Heart left ventricle (tissue), 16 donors: ENCODE measurements at regions of chr14 and their contacts with region 1.

Region 1: GRCh38 chr14:49633640-49634546 is 1.2 kb downstream of the DNAAF2 start:
- DNase-seq: peak; percentile 93 to 96 (median 94)
- ATAC-seq: peak; percentile 91 to 96 (median 94)
- H3K4me3 ChIP-seq: peak overlapping the region; percentile 68 to 98 (median 95)
- H3K27ac ChIP-seq: peak overlapping the region; percentile 79 to 100 (median 98)
- H3K4me1 ChIP-seq: peaks cover 0 to 61% (median 36%) of the 10 kb centered on the region in 12 donors
- H3K27me3 ChIP-seq: no peaks in the 10 kb centered on the region
- CTCF ChIP-seq: peak; percentile 76 to 96 (median 87)
- POLR2A ChIP-seq: peak in 1 of 2 donors; percentile 66

Region 2: DNA sequence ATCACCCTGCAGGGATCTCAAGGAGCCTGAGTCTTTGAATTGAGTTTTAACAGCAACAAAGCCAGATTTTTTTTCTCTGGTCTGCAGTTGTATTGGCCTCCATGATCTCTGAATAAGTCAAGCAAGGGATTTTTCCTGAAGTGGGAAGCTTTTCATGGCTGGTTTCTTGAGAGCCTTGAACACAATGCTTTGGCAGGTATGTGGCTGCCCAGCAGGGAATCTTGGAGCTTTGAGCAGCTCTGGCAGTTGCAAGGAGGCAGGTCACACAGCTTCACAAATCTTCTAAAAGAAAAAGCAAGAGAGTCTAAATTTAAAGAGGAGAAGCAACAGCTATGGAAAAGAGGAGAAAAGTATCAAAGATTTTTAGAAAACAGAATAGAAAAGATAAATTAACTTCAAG is 107.8 kb before region 1 on chr14:
- intact Hi-C with region 1: no loop called
- DNase-seq: no peak
- ATAC-seq: no peak
- H3K4me3 ChIP-seq: no peak overlapping the region
- H3K27ac ChIP-seq: no peak overlapping the region
- H3K4me1 ChIP-seq: no peaks in the 10 kb centered on the region
- H3K27me3 ChIP-seq: no peaks in the 10 kb centered on the region
- CTCF ChIP-seq: no peak
- POLR2A ChIP-seq: no peak

Region 3: GRCh38 chr14:49767562-49768300 is 133.8 kb after region 1 on chr14 and contains the start of gene KLHDC2:
- intact Hi-C with region 1: loop called in 9 of 10 experiments (anchors 1 to 10 kb)
- DNase-seq: peak; percentile 91 to 96 (median 93)
- ATAC-seq: peak; percentile 84 to 96 (median 93)
- H3K4me3 ChIP-seq: peak within 1 kb of the TSS; percentile 59 to 100 (median 95)
- H3K27ac ChIP-seq: peak within 1 kb of the TSS; percentile 91 to 99 (median 99)
- H3K4me1 ChIP-seq: peaks cover 0 to 37% (median 23%) of the 10 kb centered on the region in 12 donors
- H3K27me3 ChIP-seq: no peaks in the 10 kb centered on the region
- CTCF ChIP-seq: peak in 8 of 12 donors; percentile 22 to 71 (median 49)
- POLR2A ChIP-seq: peak; percentile 81 to 97
- total RNA-seq, gene KLHDC2: 68.2 to 93.6 (median 85.9) TPM

Region 4: GRCh38 chr14:49828640-49829039 is 194.7 kb after region 1 on chr14:
- intact Hi-C with region 1: loop called in 5 of 10 experiments (anchors 1 to 10 kb)
- DNase-seq: no peak
- ATAC-seq: no peak
- H3K4me3 ChIP-seq: no peak overlapping the region
- H3K27ac ChIP-seq: no peak overlapping the region
- H3K4me1 ChIP-seq: no peaks in the 10 kb centered on the region
- H3K27me3 ChIP-seq: no peaks in the 10 kb centered on the region
- CTCF ChIP-seq: no peak
- POLR2A ChIP-seq: no peak

Region 5: GRCh38 chr14:49862089-49862673 is 228.3 kb after region 1 on chr14:
- intact Hi-C with region 1: loop called in 3 of 10 experiments (anchors 1 to 10 kb)
- DNase-seq: peak; percentile 79 to 87 (median 86)
- ATAC-seq: peak; percentile 33 to 60 (median 51)
- H3K4me3 ChIP-seq: peak overlapping the region; percentile 26 to 91 (median 70)
- H3K27ac ChIP-seq: peak overlapping the region; percentile 97 to 99 (median 98)
- H3K4me1 ChIP-seq: peaks cover 0 to 47% (median 12%) of the 10 kb centered on the region in 12 donors
- H3K27me3 ChIP-seq: no peaks in the 10 kb centered on the region
- CTCF ChIP-seq: peak; percentile 99 to 100 (median 100)
- POLR2A ChIP-seq: no peak